ENCODE measurements at regions of chr1 and their contacts with region 1.

Region 1: DNA sequence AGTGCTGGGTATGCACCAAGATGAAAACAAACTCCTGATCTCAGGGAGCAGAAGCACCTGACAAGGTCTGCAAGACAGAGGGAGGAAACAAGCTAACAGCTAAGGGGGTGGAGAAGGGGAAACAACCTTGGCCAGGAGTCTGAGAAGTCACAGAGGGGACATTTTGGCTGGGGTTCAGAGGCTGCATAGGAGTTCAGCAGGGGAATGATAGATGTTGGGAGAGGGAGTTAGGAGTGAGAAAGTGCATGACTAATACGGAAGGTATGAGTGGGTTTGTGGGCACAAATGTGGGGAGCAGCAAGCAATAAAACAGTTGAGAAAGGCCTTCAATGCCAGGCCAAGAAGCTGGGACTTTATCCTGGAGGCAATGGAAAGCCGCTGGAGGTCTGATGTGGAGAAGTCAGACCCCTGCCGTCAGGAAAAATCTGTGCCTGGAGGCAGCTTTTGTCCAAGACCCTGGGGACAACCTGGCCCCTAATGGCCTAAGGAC is 16.4 kb downstream of the EPHA2 start:
- DNase-seq: peak; percentile 95
- ATAC-seq: peak; percentile 22
- H3K4me3 ChIP-seq: peak overlapping the region; percentile 44
- H3K27ac ChIP-seq: peak overlapping the region; percentile 94
- H3K4me1 ChIP-seq: peaks cover 70% of the 10 kb centered on the region
- H3K27me3 ChIP-seq: no peaks in the 10 kb centered on the region
- CTCF ChIP-seq: no peak

Region 2: DNA sequence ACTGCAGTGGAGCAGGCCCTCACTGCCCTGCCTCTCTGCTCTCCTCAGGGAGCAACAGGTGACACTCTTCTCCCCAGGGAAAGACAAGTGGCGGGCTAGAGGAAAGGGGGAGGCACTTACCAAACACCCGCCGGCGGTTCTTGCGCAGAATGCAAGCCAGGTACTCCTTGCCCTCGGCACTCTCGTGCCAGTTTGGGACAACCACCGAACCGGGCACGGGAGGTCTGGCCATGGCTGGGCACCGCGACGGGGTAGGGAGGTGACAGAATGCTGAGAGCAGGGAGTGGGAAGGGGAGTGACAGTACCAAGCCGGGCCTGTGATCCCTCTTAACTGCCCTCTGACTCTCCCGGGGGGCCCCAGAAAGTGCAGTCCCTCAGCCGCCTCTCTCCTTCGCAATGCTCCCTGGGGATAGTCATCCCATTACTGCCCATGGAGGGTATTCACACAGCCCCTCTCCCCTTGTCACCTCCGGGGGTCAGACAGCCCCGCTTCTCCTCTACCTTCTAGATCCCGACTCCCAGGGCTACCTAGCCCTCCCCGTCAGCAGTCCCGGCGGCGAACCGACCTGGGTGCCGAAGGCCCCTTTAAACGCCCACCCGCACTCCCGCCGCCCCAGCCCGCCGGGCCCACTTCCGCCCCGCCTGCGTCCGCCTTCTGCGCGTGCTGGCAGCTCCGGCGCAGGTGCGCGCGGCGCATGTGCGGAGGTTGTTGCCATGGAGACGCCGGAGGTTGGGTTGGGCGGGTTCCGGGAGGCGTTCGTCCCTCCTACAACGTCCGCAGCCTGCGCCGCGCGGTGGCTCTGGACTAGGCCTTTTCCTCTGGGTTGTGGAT is 97.2 kb after region 1 on chr1 and contains the start of gene CPLANE2:
- CTCF ChIA-PET with region 1: no interaction called
- POLR2A ChIA-PET with region 1: no interaction called
- intact Hi-C with region 1: loop called (anchors 2 kb)
- DNase-seq: peak; percentile 95
- ATAC-seq: peak; percentile 79
- H3K4me3 ChIP-seq: peak within 1 kb of the TSS; percentile 72
- H3K27ac ChIP-seq: peak within 1 kb of the TSS; percentile 65
- H3K4me1 ChIP-seq: peaks cover 22% of the 10 kb centered on the region
- H3K27me3 ChIP-seq: no peaks in the 10 kb centered on the region
- CTCF ChIP-seq: 0 out of 2 replicates have a peak, but pooled peaks have one; percentile 1
- total RNA-seq, gene CPLANE2: 9.6 and 11.6 TPM in 2 replicates

Region 3: GRCh38 chr1:16367968-16368900 is 228.7 kb after region 1 on chr1:
- CTCF ChIA-PET with region 1: no interaction called
- POLR2A ChIA-PET with region 1: no interaction called
- intact Hi-C with region 1: no loop called
- DNase-seq: peak; percentile 67
- ATAC-seq: peak; percentile 32
- H3K4me3 ChIP-seq: peak overlapping the region; percentile 79
- H3K27ac ChIP-seq: peak overlapping the region; percentile 78
- H3K4me1 ChIP-seq: peaks cover 17% of the 10 kb centered on the region
- H3K27me3 ChIP-seq: no peaks in the 10 kb centered on the region
- CTCF ChIP-seq: no peak

Measured in PC-3 (cell line).